Right ventricle myocardium inferior (tissue), 1 donor: ENCODE measurements at regions of chr10 and their contacts with region 1.

Region 1: DNA sequence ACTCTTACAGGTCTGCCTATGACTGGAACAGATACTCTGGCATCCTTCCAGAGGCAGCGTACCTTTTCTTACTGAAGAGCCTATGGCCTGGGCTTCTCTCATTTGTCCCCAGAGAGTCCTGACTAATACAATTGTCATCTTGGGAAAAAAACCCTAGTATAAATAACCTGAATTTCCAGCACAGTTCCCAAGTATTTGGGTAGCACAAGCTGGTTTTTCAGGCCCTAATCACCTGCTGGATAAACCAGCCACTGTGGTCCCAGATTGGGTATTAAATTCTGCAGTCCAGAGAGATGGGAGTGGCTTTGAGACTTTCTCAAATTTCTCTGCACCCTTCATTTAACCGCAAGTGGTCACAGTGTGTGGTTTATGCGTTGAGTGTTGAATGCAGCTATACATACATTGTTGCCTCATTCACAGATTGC is 186.8 kb upstream of the NEBL start:
- DNase-seq: no peak
- ATAC-seq: no peak

Region 2: GRCh38 chr10:21014141-21014540 is 69.7 kb before region 1 on chr10:
- intact Hi-C with region 1: no loop called
- DNase-seq: no peak
- ATAC-seq: peak; percentile 41

Region 3: DNA sequence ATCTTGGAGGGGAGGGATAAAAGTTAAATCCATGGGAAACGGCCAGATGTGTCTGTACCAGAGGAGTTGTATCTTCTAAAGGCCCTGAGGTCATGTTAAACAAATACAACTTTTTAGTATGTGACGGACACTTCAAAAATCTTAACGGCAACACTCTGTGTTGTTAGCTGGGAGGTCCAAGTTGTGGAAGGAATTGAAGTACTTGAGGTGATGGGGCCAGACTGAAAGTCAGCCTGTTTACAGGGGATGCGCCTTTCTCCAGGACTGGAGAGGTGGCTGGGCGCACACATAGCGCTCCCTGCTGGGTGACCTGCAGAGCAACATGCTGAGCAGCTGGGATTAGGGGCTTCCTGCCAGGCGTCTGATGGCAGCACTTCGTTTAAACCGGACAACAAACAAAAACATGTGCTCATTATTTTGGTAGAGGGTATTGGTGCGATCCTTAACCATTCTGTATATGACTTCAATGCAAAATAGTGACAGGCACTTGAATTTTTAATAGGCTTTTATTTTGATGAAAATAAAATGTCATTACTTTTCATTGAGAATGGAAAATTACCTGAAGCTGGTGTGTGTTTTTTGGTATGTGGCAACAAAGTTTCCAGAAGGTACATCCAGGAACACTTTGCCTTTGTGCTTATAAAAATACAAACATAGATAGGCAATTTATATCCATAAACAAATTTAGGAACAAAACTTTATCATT is 648.3 kb after region 1 on chr10:
- intact Hi-C with region 1: loop called (anchors 10 kb)
- DNase-seq: peak; percentile 78
- ATAC-seq: peak; percentile 89